ENCODE measurements at regions of chrX and their contacts with region 1.

Region 1: GRCh38 chrX:40108959-40109287 is 11.2 kb upstream of the BCOR start:
- DNase-seq: peak; percentile 79
- H3K4me3 ChIP-seq: peak overlapping the region in 2 of 3 experiments; percentile 51 to 56
- H3K27ac ChIP-seq: peak overlapping the region; percentile 44
- H3K4me1 ChIP-seq: peaks cover 15% of the 10 kb centered on the region
- H3K27me3 ChIP-seq: peaks cover 19% of the 10 kb centered on the region
- CTCF ChIP-seq: no peak

Region 2: GRCh38 chrX:39911278-39911897 is 197.5 kb before region 1 on chrX:
- CTCF ChIA-PET with region 1: no interaction called
- dilution Hi-C with region 1: no loop called
- in situ Hi-C with region 1: no loop called
- intact Hi-C with region 1: no loop called
- DNase-seq: no peak
- H3K4me3 ChIP-seq: no peak overlapping the region
- H3K27ac ChIP-seq: no peak overlapping the region
- H3K4me1 ChIP-seq: peaks cover 12% of the 10 kb centered on the region
- H3K27me3 ChIP-seq: no peaks in the 10 kb centered on the region
- CTCF ChIP-seq: no peak

Region 3: DNA sequence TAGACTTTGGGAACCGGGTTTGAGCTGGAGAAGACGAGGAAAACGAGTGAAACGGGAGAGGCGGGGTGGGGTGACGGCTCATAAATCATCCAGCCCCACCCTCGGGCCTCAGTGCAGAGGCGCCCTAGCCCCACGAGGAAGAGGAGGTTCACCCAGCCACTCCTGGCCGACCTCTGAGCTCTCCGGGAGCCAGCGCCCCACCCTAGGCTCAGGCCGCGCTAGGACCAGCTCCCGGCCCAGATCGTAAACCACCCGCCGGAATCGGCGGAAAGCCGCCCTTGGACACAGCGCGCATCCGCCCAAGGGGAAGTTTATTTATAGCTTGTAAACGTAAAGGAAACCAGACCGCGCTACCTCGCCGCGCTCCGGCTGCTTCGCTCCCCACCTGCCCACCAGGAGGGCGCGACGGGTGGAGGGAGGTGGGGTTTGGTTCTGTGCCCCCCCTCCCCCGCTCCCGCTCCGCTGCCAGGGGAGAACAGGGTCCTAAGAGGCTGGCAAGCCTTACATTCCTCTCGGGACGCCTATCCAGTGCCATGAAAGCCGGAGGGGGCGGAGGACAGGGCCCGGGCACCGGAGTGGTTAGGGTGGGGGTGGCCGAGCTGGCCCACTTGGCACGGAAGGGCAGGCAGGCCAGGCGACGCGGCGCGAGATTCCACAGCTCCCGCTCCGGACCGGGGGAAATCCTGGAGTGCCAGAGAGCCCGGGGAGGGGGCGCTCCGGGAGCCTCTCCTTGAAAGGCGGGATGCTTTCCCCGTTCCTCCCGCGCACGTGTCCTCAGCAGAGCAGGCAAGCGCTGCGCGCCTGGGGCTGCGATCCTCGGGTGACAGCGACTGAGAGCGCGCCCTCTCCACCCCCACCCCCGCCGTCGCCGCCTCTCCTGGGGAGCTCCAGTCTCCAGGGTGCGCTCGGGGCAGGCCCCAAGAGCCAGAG is 95.4 kb before region 1 on chrX:
- CTCF ChIA-PET with region 1: no interaction called
- dilution Hi-C with region 1: no loop called
- in situ Hi-C with region 1: no loop called
- intact Hi-C with region 1: loop called (anchors 5 kb)
- DNase-seq: peak; percentile 58
- H3K4me3 ChIP-seq: peak overlapping the region; percentile 42 to 47 (median 46)
- H3K27ac ChIP-seq: peak overlapping the region; percentile 24
- H3K4me1 ChIP-seq: peaks cover 7% of the 10 kb centered on the region
- H3K27me3 ChIP-seq: peaks cover 13% of the 10 kb centered on the region
- CTCF ChIP-seq: no peak

Region 4: DNA sequence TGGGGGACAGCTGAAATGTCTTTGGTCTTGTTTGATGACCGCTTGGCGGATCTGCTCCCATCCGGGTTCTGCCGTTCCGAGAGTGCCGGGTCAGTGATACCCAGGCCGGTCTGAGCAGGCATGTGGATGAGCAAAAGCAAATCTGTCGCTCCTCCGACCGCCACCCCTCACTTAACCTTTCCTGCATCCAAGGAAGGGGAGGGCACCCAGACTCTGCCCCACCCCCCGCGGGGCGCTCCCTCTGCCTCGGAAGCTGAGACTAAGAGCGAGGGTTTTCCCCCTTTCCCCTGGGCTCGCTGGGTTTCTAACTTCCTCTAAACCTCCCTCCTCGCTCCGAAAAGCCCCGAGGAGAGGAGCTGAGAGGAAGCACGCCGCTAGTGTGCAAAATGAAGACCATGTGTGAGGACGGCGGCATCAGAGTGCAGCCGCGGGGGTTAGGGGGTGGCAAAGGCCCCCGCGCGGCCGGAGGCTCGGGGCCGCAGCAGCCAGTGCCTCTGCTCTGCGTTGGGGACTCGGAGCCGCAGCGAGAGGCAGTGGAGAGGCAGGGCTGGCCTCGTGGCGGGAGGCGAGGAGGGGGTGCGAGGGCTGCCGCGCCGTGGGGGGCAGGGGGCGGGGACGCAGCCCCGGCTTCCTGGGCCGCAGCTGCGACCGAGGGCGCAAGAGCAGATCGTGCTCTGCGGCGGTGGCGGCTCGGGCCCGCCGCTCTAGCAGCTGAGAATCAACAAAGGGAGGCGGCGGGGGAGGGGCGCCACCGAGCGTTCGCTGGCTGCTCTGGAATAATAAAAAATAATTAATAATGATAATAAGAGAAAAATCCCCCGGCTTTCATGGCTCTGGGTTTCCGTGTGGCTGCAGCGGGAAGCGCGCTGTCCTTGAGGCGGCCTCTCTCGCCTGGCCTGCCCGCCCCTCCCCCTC is 44.7 kb after region 1 on chrX:
- CTCF ChIA-PET with region 1: no interaction called
- dilution Hi-C with region 1: no loop called
- in situ Hi-C with region 1: no loop called
- intact Hi-C with region 1: loop called (anchors 5 kb)
- DNase-seq: no peak
- H3K4me3 ChIP-seq: peak overlapping the region in 2 of 3 experiments; percentile 24 to 36
- H3K27ac ChIP-seq: no peak overlapping the region
- H3K4me1 ChIP-seq: peaks cover 18% of the 10 kb centered on the region
- H3K27me3 ChIP-seq: peaks cover 41% of the 10 kb centered on the region
- CTCF ChIP-seq: no peak

Measured in mammary epithelial cell (primary cell).